Mammary epithelial cell (primary cell): ENCODE measurements at regions of chr4 and their contacts with region 1.

Region 1: DNA sequence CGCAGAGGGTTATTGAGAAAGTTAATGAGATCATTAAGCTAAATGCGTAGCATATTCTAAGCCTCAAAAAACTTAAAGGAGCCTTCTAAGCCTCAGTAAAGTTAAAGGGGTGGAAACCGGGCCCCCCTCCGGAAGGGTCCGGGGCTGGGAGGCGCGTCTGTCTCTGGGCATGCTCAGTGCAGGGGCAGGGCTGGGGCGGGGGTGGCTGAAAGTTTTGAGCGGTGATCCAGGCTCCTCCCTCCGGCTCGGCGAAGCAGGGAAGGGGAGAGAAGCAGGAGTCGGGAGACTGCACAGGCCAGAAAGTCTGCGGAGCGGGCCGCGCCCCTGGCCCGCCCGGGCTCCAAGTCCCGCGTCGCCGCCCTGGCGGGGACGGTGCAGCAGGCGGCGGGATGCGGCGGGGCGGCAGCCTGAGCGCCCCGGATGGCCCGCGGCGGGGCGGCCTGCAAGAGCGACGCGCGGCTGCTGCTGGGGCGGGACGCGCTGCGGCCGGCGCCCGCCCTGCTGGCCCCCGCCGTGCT is at the start of gene EVC:
- DNase-seq: peak; percentile 58
- H3K4me3 ChIP-seq: peak within 1 kb of the TSS; percentile 49 to 78 (median 51)
- H3K27ac ChIP-seq: peak within 1 kb of the TSS; percentile 44
- H3K4me1 ChIP-seq: peaks cover 45% of the 10 kb centered on the region
- H3K27me3 ChIP-seq: no peaks in the 10 kb centered on the region
- CTCF ChIP-seq: peak in 1 of 2 donors; percentile 9
- total RNA-seq, gene EVC: 29.1 to 38.5 TPM

Region 2: GRCh38 chr4:5399790-5400421 is 311.1 kb before region 1 on chr4:
- CTCF ChIA-PET with region 1: no interaction called
- dilution Hi-C with region 1: no loop called
- in situ Hi-C with region 1: no loop called
- intact Hi-C with region 1: loop called (anchors 5 kb)
- DNase-seq: no peak
- H3K4me3 ChIP-seq: no peak overlapping the region
- H3K27ac ChIP-seq: no peak overlapping the region
- H3K4me1 ChIP-seq: no peaks in the 10 kb centered on the region
- H3K27me3 ChIP-seq: no peaks in the 10 kb centered on the region
- CTCF ChIP-seq: peak; percentile 72 to 86

Region 3: GRCh38 chr4:5758741-5759140 is 47.7 kb after region 1 on chr4:
- CTCF ChIA-PET with region 1: no interaction called
- dilution Hi-C with region 1: no loop called
- in situ Hi-C with region 1: no loop called
- intact Hi-C with region 1: loop called (anchors 1 kb)
- DNase-seq: peak; percentile 98
- H3K4me3 ChIP-seq: no peak overlapping the region
- H3K27ac ChIP-seq: peak overlapping the region; percentile 89
- H3K4me1 ChIP-seq: peaks cover 27% of the 10 kb centered on the region
- H3K27me3 ChIP-seq: no peaks in the 10 kb centered on the region
- CTCF ChIP-seq: no peak

Region 4: DNA sequence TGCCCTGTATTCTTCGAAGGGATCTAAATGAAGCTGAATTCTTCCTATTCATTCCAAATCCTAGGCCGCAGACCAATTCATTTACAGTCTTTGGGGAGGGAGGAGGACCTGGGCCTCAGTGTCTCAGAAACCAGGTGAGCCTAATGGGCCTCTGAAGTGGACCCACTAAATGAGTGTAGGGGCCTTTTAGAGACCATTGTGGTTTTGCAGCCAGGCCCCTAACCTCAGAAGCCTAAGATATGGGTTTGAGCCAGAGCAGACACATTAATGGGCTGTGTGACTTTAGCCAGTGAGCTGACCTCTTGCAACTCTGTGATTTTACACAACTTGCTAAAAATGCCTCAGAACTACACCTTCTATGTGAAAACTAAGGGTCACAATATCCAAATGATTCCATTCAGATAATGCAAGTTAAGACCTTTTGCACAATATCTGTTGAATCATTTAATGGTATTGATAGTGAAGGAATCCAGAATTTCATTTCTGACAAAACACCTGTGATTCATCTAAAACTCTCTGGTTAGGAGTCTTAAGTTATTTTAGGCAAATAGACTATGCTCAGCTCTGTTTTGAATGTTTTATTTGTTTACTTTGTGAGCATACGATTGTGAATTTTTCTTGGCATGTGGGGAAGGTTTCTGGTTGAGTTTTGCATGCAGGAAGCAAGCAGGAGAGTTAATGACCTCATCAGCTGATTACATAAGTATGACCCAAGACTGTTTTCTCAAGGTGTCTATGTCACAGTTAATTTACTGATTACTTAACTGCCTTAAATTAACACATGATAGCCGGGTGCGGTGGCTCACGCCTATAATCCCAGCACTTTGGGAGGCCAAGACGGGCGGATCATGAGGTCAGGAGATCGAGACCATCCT is 75.0 kb after region 1 on chr4:
- CTCF ChIA-PET with region 1: no interaction called
- dilution Hi-C with region 1: no loop called
- in situ Hi-C with region 1: no loop called
- intact Hi-C with region 1: loop called (anchors 1 kb)
- DNase-seq: peak; percentile 62
- H3K4me3 ChIP-seq: no peak overlapping the region
- H3K27ac ChIP-seq: no peak overlapping the region
- H3K4me1 ChIP-seq: no peaks in the 10 kb centered on the region
- H3K27me3 ChIP-seq: no peaks in the 10 kb centered on the region
- CTCF ChIP-seq: no peak